ENCODE measurements at regions of chr2 and their contacts with region 1.

Region 1: GRCh38 chr2:174023591-174024523 is 58.7 kb upstream of the SP3 start:
- DNase-seq: peak; percentile 33
- H3K4me3 ChIP-seq: no peak overlapping the region
- H3K27ac ChIP-seq: peak overlapping the region; percentile 63 to 70
- H3K4me1 ChIP-seq: no peaks in the 10 kb centered on the region
- H3K27me3 ChIP-seq: no peaks in the 10 kb centered on the region
- CTCF ChIP-seq: peak in 1 of 4 experiments; percentile 15
- POLR2A ChIP-seq: peak; percentile 34

Region 2: GRCh38 chr2:173986805-173987204 is 37.1 kb before region 1 on chr2:
- intact Hi-C with region 1: loop called (anchors 5 kb)
- DNase-seq: no peak
- H3K4me3 ChIP-seq: no peak overlapping the region
- H3K27ac ChIP-seq: peak overlapping the region; percentile 66 to 67
- H3K4me1 ChIP-seq: peaks cover 10% of the 10 kb centered on the region
- H3K27me3 ChIP-seq: no peaks in the 10 kb centered on the region
- CTCF ChIP-seq: no peak
- POLR2A ChIP-seq: no peak

Measured in prostate gland (tissue), 2 donors.